Activated CD4-positive, alpha-beta T cell treated with anti-CD3 and anti-CD28 coated beads, Interleukin-2, amount 10 ng/mL, durations not matched to agents 24 days and 14 days (primary cell): ENCODE measurements at regions of chr1 and their contacts with region 1.

Region 1: GRCh38 chr1:214439352-214440119 is 111.9 kb downstream of the PTPN14 start:
- DNase-seq: peak; percentile 86
- H3K4me3 Mint-ChIP-seq: peak overlapping the region; percentile 74
- H3K27ac Mint-ChIP-seq: peak overlapping the region; percentile 98
- H3K4me1 Mint-ChIP-seq: peaks cover 55% of the 10 kb centered on the region
- H3K27me3 Mint-ChIP-seq: no peaks in the 10 kb centered on the region

Region 2: DNA sequence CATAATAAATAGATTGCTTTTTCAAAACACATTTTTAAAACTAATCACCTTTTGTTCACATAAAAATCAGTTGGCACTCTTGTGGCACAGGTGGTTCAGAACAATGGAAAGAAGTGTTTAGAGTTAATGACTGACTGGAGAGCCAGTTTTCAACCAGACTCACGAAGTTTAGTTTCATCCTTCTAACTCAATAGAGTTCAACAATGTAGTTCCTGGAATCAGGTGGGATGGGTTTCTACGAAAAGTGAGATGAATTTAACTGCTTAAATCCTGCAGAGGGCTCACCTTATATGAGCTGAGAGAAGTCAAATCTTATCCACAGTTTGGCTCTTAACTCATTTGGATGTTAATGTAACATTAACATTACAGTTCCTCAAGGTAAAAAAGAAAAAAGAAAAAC is 42.0 kb before region 1 on chr1:
- intact Hi-C with region 1: loop called (anchors 2 kb)
- DNase-seq: peak; percentile 71
- H3K4me3 Mint-ChIP-seq: peak overlapping the region; percentile 50
- H3K27ac Mint-ChIP-seq: peak overlapping the region; percentile 81
- H3K4me1 Mint-ChIP-seq: peaks cover 42% of the 10 kb centered on the region
- H3K27me3 Mint-ChIP-seq: no peaks in the 10 kb centered on the region

Region 3: GRCh38 chr1:214427871-214428277 is 11.7 kb before region 1 on chr1:
- intact Hi-C with region 1: loop called (anchors 1 kb)
- DNase-seq: peak; percentile 93
- H3K4me3 Mint-ChIP-seq: peak overlapping the region; percentile 72
- H3K27ac Mint-ChIP-seq: peak overlapping the region; percentile 97
- H3K4me1 Mint-ChIP-seq: peaks cover 34% of the 10 kb centered on the region
- H3K27me3 Mint-ChIP-seq: no peaks in the 10 kb centered on the region

Region 4: DNA sequence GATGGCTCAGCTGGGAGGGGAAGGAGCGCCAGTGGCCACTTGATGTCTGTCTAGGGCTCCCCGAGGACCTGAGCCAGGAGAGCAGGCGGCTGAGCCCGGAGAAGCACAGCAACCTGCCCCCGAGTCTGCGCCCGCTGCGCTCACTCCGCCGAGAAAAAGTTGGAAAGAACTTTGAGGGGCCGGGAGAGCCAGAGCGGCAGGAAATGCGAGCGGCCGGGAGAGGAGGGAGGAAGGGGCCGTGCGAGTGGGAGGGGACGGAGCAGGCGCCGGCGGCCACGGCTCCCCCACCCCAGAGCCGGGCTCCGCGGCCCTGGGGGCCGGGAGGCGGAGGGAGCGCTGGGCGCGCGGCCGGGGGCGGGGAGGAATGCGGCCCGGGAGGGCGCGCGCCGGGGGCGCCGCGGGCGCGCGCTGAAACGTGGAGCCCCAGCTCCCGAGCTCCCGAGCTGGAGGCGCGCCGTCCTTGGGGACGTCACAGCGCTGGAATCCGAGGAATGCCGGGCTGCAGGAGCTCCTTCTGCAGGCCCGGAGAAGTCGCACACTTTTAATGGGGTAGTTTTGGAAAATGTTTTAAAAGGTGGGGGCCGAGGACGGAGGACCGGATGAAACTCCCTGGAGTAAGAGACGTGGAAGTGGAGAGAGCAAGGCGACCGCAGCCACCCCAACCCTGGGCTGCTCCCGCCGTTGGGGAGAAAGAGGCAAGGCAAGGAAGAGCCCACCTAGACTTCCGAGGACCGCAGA is 112.1 kb after region 1 on chr1 and contains the start of gene PTPN14:
- intact Hi-C with region 1: loop called (anchors 5 kb)
- DNase-seq: peak; percentile 71
- H3K4me3 Mint-ChIP-seq: peak within 1 kb of the TSS; percentile 93
- H3K27ac Mint-ChIP-seq: peak within 1 kb of the TSS; percentile 87
- H3K4me1 Mint-ChIP-seq: peaks cover 19% of the 10 kb centered on the region
- H3K27me3 Mint-ChIP-seq: peaks cover 56% of the 10 kb centered on the region
- total RNA-seq, gene PTPN14: 29.7 and 29.9 TPM in 2 replicates